ENCODE measurements at regions of chr17 and their contacts with region 1.

Region 1: GRCh38 chr17:56939901-56940343 is 20.9 kb downstream of the COIL start:
- H3K4me3 Mint-ChIP-seq: no peak overlapping the region
- H3K27ac Mint-ChIP-seq: no peak overlapping the region
- H3K4me1 Mint-ChIP-seq: peaks cover 5% of the 10 kb centered on the region
- H3K27me3 Mint-ChIP-seq: no peaks in the 10 kb centered on the region

Region 2: GRCh38 chr17:56819431-56820145 is 120.3 kb before region 1 on chr17:
- intact Hi-C with region 1: loop called (anchors 1 kb)
- H3K4me3 Mint-ChIP-seq: no peak overlapping the region
- H3K27ac Mint-ChIP-seq: no peak overlapping the region
- H3K4me1 Mint-ChIP-seq: peaks cover 4% of the 10 kb centered on the region
- H3K27me3 Mint-ChIP-seq: peaks cover 5% of the 10 kb centered on the region

Region 3: DNA sequence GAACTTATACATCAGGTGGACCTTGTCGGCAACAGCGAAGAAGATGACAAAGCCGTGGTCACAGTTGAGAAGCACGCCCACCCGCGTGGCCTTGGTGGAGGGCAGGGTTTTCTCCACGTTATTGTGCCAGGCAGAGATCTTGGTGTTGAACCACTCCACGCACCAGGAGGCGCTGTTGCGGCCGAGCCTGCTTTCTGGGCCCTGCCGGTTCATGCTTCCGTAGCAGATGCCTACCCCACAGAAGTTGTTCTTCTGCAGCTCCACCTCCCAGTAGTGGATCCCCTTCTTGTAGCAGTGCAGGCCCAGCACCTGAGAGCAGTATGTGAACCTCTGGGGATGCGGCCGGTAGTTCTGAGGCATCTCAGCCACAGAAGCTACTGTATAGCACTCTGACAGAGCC is 48.1 kb before region 1 on chr17:
- intact Hi-C with region 1: loop called (anchors 5 kb)
- H3K4me3 Mint-ChIP-seq: no peak overlapping the region
- H3K27ac Mint-ChIP-seq: no peak overlapping the region
- H3K4me1 Mint-ChIP-seq: peaks cover 16% of the 10 kb centered on the region
- H3K27me3 Mint-ChIP-seq: no peaks in the 10 kb centered on the region

Region 4: GRCh38 chr17:56908001-56908542 is 31.9 kb before region 1 on chr17:
- intact Hi-C with region 1: loop called (anchors 5 kb)
- H3K4me3 Mint-ChIP-seq: peak overlapping the region; percentile 42
- H3K27ac Mint-ChIP-seq: peak overlapping the region; percentile 86
- H3K4me1 Mint-ChIP-seq: peaks cover 68% of the 10 kb centered on the region
- H3K27me3 Mint-ChIP-seq: no peaks in the 10 kb centered on the region

Measured in dendritic cell treated with granulocyte-macrophage colony-stimulating factor and Interleukin-4, amounts not matched to agents 40 ng/mL and 50 ng/mL, for 4 days (primary cell).